MCF 10A (cell line): ENCODE measurements at regions of chr7 and their contacts with region 1.

Region 1: DNA sequence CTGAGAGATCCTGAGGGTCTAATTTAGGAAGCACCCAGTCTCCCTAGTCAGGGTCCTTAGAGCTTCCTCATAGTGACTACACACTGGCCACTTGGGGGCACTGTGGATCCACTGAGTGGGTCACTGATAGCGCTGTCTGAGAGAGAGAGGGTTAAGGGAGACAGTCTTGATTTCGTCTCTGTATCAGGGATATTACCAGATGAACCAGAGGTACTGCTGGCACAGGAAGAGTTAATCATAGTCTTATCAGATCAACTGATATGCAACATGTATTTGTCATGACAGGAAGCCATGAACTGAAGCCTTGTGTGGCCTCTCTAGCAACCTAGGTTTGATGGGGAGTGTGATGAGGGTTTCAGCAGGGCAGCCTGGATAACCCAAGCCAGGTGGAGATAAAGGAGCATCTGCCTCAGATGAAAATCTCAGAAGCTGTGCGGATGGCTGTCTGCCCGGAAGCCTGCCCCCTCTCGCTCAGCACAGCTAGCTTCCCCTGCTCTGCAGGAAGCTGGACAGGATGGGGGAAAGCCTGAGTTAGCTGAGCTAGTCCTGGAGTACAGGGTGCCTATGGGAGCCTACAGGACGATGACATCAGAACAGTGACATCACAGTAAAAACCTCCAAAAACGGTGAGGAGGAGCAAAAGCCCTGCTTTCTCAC is 214.0 kb upstream of the PRSS1 start:
- DNase-seq: peak; percentile 93
- H3K4me3 Mint-ChIP-seq: no peak overlapping the region
- H3K27ac Mint-ChIP-seq: no peak overlapping the region
- H3K4me1 Mint-ChIP-seq: peaks cover 21% of the 10 kb centered on the region
- H3K27me3 Mint-ChIP-seq: no peaks in the 10 kb centered on the region
- CTCF ChIP-seq: peak; percentile 93

Region 2: DNA sequence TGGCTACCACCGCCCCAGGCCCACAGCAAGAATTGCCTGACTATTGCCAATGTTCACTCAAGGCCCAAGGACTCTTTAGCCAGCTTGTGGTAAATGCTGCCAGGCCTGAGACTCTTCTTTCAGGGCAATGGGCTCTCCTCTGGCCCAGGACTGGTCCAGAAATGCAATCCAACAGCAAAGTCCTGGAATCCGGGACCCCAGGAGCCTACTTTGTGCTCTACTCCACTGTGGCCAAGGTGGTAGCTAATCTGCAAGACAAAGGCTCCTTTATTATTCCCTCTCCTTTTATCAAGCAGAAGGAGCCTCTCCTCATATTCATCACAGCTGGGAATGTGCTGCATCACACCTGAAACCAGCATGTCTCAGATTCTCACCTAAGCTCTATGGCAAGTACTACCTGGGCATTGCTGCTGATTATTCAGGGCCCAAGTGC is 169.8 kb before region 1 on chr7:
- CTCF ChIA-PET with region 1: no interaction called
- POLR2A ChIA-PET with region 1: no interaction called
- intact Hi-C with region 1: no loop called
- DNase-seq: no peak
- H3K4me3 Mint-ChIP-seq: no peak overlapping the region
- H3K27ac Mint-ChIP-seq: no peak overlapping the region
- H3K4me1 Mint-ChIP-seq: no peaks in the 10 kb centered on the region
- H3K27me3 Mint-ChIP-seq: peaks cover 27% of the 10 kb centered on the region
- CTCF ChIP-seq: no peak

Region 3: DNA sequence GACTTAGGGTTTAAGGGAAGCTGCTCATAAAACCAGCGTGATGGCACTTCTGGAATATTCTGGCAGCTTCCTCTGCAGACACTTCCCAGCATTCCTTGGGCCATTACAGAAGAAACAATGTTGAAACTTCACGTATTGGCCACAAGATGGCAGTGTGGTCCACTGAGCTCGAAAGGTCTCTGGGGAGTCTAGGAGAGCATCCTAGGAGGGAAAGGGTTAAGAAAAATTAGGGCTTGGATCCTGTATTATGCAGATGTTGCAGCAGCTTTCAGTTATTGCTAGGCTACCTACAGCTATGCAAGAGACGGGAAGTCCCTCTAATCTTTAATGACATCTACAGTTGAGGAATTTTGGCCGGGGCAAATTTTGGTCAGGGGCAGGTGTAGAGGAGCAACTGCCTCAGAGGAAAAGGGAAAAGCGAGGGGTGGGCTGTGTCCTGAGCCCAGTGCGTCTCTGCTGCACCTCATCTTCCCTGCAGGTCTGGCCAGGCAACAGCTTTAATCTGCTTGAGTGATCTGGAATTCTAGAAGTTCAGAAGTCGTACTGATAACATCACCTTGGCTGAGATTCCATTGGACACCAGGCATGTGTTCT is 56.7 kb before region 1 on chr7:
- CTCF ChIA-PET with region 1: interaction called, 21 read pairs
- POLR2A ChIA-PET with region 1: no interaction called
- intact Hi-C with region 1: no loop called
- DNase-seq: peak; percentile 80
- H3K4me3 Mint-ChIP-seq: no peak overlapping the region
- H3K27ac Mint-ChIP-seq: peak overlapping the region; percentile 22
- H3K4me1 Mint-ChIP-seq: peaks cover 32% of the 10 kb centered on the region
- H3K27me3 Mint-ChIP-seq: peaks cover 9% of the 10 kb centered on the region
- CTCF ChIP-seq: peak; percentile 57

Region 4: DNA sequence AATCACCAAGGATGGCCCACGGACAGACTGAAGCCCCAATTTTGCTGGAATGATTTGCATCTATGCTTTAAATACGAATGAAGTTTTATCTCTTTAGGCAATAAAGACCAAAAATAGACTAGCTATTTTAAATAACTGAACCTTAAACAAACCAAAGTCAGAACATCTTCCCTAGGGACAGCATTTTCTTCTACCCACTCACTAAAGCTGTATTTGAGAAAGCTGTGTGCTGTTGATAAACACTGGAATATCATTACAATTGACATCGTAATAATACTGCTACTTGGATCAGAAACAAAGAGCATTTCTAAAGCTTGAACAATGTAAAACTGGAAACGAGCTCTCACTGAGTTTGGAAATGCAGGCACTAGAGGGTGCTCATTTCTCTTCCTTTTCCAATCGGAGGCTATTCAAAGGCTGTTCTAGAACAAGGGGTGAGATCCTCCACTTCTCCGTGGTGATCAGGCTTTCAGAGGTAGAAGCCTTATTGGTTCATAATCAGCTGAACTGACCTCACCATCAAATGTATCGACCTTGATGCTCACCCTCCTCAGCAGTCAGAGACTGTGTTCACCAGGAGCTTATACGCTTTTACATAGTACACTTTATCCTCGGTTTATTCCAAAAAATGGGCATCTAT is 11.3 kb before region 1 on chr7:
- CTCF ChIA-PET with region 1: interaction called, 79 read pairs
- POLR2A ChIA-PET with region 1: interaction called, 4 read pairs
- intact Hi-C with region 1: no loop called
- DNase-seq: no peak
- H3K4me3 Mint-ChIP-seq: no peak overlapping the region
- H3K27ac Mint-ChIP-seq: no peak overlapping the region
- H3K4me1 Mint-ChIP-seq: no peaks in the 10 kb centered on the region
- H3K27me3 Mint-ChIP-seq: peaks cover 36% of the 10 kb centered on the region
- CTCF ChIP-seq: no peak

Region 5: DNA sequence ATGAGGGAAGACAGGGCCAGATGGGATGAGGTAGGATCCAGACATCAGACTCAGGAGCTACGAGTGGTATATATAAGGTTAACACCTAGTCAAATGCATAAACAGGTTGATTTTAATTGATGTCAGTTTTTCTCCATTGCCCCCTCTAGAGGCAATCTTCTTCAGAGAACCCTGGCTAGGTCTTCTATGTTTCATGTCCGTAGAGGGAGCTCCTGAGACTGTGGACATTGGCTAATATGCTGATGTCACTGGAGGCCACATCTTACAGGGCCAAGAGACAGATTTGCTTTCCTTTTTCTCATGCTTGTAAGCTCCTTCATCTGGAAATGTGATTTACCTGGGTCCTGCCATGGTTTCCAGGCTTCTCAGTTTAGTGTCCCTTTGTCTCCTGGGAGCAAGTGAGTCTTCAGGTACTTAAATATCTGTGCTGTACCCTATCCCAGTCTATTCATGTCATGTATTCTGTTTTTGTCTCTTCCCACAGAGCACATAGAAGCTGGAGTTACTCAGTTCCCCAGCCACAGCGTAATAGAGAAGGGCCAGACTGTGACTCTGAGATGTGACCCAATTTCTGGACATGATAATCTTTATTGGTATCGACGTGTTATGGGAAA is 52.4 kb after region 1 on chr7:
- CTCF ChIA-PET with region 1: interaction called, 56 read pairs
- POLR2A ChIA-PET with region 1: interaction called, 3 read pairs
- intact Hi-C with region 1: loop called (anchors 1 kb)
- DNase-seq: peak; percentile 85
- H3K4me3 Mint-ChIP-seq: no peak overlapping the region
- H3K27ac Mint-ChIP-seq: no peak overlapping the region
- H3K4me1 Mint-ChIP-seq: peaks cover 6% of the 10 kb centered on the region
- H3K27me3 Mint-ChIP-seq: no peaks in the 10 kb centered on the region
- CTCF ChIP-seq: peak; percentile 63

Region 6: GRCh38 chr7:142611566-142612236 is 76.5 kb after region 1 on chr7:
- CTCF ChIA-PET with region 1: interaction called, 49 read pairs
- POLR2A ChIA-PET with region 1: interaction called, 4 read pairs
- intact Hi-C with region 1: no loop called
- DNase-seq: no peak
- H3K4me3 Mint-ChIP-seq: no peak overlapping the region
- H3K27ac Mint-ChIP-seq: no peak overlapping the region
- H3K4me1 Mint-ChIP-seq: peaks cover 11% of the 10 kb centered on the region
- H3K27me3 Mint-ChIP-seq: no peaks in the 10 kb centered on the region
- CTCF ChIP-seq: no peak

Region 7: DNA sequence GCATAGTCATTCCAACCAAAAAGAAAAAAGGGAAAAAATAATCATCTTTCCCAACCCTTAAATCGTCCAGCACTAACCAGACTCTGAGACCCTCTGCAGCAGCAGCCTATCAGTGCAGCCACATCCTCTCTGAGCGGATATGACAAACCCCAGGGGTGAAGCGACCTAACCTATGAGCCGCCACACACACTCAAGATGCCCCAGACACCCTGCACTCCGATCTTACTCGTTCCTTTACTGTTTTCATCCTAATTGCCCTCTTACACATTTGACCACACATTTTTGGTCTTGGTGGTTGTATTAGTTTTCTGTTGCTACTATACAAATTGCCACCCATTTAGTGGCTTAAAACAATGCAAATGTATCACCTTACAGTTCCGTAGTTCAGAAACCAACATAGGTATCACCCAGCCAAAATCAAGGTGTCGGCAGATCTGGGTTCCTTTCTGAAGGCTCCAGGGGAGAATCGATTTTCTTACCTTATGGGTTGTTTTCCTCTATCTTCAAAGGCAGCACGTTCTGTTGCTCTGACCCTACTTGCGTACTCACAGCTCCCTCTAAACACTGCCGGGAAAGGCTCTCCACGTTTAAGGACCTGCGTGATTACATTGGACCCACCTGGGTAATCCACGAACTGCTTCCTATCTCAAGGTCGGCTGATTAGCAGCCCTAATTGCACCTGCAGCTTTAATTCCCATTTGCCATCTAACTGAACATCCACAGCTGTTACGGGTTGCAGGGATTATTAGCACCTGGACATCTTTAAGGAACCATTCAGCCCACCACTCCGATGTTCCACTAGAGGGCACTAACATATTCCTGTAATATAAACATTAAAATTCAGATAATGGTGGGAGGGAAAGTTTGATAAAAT is 176.7 kb after region 1 on chr7:
- CTCF ChIA-PET with region 1: interaction called, 36 read pairs
- POLR2A ChIA-PET with region 1: no interaction called
- intact Hi-C with region 1: loop called (anchors 1 kb)
- DNase-seq: peak; percentile 40
- H3K4me3 Mint-ChIP-seq: no peak overlapping the region
- H3K27ac Mint-ChIP-seq: no peak overlapping the region
- H3K4me1 Mint-ChIP-seq: no peaks in the 10 kb centered on the region
- H3K27me3 Mint-ChIP-seq: peaks cover 76% of the 10 kb centered on the region
- CTCF ChIP-seq: peak; percentile 47

Region 8: DNA sequence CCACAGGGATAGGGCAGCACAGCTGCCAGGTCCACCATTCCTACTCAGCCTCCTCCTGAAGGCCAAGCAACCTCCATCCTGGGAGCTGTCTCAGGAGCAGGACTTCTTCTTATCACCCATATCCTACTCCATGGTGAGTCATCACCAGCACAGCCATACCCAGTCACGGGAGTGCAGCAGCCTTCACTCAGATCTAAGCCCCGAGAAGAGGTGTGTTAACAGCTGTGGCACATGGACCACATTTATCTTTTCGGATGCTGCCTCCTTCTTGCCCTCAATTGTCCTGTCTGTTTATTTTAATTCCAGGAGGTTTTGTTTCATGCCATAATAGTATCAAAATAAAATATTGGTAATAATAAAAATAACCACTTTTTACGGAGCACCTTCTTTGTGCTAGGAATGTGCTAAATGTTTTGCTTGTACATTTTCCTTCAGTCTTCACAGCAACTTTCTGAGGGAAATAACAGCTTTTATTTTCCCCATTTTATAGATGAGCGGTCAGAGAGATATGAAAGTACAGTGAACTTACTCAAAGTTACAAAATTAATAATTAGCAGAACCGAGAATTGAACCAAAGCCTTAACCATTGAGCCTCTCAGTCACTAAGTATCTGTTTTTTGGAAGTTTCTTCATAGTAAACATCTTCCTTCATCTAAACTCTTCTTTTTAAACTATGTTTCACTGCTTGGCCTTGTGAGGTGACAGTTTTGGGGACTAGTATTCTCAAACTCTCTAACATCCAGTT is 429.4 kb after region 1 on chr7:
- CTCF ChIA-PET with region 1: no interaction called
- POLR2A ChIA-PET with region 1: no interaction called
- intact Hi-C with region 1: no loop called
- DNase-seq: peak; percentile 9
- H3K4me3 Mint-ChIP-seq: no peak overlapping the region
- H3K27ac Mint-ChIP-seq: no peak overlapping the region
- H3K4me1 Mint-ChIP-seq: no peaks in the 10 kb centered on the region
- H3K27me3 Mint-ChIP-seq: peaks cover 45% of the 10 kb centered on the region
- CTCF ChIP-seq: no peak